Activated CD4-positive, alpha-beta memory T cell treated with anti-CD3 and anti-CD28 coated beads for 36 hours (primary cell): ENCODE measurements at regions of chr15 and their contacts with region 1.

Region 1: DNA sequence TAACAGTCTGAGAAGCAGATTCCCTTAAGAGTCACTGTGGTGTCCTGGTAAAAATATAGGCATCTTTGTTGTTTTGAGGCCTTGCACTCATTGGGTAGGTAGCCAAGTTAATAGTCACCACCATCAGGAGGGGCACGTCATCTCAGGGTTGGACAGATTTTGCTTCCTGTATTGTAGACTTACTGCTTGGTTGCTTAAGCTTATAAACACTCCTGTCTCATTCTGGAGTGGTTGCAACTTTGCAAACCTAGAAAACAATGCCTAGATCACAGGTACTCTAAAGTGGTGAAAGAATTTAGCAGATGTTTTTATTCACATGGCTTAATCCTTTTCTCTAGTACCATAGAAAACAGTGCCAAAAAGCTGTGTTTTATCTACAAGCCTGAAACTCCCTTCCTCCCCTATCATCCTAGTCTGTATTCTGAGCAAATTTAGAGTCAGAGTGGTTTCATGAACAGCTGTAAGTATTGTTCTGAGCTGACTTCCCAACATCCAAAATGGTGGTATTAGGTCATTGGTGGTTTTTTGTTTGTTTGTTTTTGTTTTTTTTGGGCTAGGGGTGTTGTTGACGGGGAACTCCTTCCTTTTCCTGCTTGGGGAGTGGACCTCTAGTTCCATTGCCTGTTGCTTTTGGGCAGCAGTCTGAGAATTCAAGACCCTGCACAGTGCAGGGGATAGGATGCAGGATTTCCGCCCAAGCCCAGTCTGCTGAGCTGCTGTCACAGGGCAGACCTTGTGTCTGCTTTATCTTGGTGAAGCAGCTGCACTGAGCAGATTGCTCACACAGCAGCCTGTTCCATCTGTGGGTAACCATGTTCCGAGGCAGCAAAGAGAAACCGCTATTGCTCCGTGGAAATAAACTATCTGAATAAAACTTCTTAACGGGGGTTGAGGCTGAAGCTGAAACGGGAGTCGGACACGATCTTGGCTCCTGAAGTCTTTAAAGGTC is 202.0 kb downstream of the AKAP13 start:
- DNase-seq: peak; percentile 79
- H3K4me3 Mint-ChIP-seq: peak overlapping the region; percentile 86
- H3K27ac Mint-ChIP-seq: peak overlapping the region; percentile 93
- H3K4me1 Mint-ChIP-seq: peaks cover 79% of the 10 kb centered on the region
- H3K27me3 Mint-ChIP-seq: no peaks in the 10 kb centered on the region

Region 2: DNA sequence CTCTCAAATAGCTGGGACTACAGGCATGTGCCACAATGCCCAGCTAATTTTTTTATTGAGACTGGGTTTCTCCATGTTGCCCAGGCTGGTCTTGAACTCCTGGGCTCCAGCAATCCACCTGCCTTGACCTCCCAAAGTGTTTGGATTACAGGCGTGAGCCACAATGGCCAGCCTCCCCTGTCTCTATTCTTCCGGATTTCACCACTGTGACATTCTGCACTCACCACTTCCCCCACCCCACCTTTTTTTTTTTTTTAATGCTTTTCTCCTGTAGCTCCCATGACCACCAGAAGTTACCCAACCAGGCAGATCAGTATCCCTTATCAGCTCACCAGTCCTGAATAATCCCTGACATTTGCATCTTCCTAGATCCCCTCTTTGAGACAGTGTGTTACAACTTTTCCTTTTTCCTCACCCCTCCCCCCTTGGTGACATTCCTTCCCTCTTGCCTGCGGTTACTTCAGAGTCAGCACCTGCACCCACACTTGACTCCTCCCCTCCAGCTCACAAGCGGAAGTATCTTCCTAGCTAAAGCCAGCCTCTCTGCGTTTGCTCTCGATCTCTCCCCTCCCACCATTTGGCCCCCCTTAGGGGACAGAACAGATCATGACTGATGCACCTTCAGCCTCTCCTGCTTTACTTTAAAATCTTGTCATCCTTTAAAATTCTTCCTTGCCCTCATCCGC is 847.5 kb before region 1 on chr15:
- CTCF ChIA-PET with region 1: no interaction called
- POLR2A ChIA-PET with region 1: no interaction called
- intact Hi-C with region 1: loop called (anchors 5 kb)
- DNase-seq: peak; percentile 86
- H3K4me3 Mint-ChIP-seq: peak overlapping the region; percentile 67
- H3K27ac Mint-ChIP-seq: peak overlapping the region; percentile 96
- H3K4me1 Mint-ChIP-seq: peaks cover 61% of the 10 kb centered on the region
- H3K27me3 Mint-ChIP-seq: no peaks in the 10 kb centered on the region

Region 3: GRCh38 chr15:85407804-85408746 is 174.3 kb before region 1 on chr15:
- CTCF ChIA-PET with region 1: interaction called, 3 read pairs
- POLR2A ChIA-PET with region 1: no interaction called
- intact Hi-C with region 1: loop called (anchors 1 kb)
- DNase-seq: peak; percentile 64
- H3K4me3 Mint-ChIP-seq: peak overlapping the region; percentile 53
- H3K27ac Mint-ChIP-seq: peak overlapping the region; percentile 91
- H3K4me1 Mint-ChIP-seq: peaks cover 81% of the 10 kb centered on the region
- H3K27me3 Mint-ChIP-seq: no peaks in the 10 kb centered on the region

Region 4: GRCh38 chr15:85543741-85544155 is 38.7 kb before region 1 on chr15:
- CTCF ChIA-PET with region 1: interaction called, 13 read pairs
- POLR2A ChIA-PET with region 1: interaction called, 27 read pairs
- intact Hi-C with region 1: loop called (anchors 1 kb)
- DNase-seq: peak; percentile 20
- H3K4me3 Mint-ChIP-seq: no peak overlapping the region
- H3K27ac Mint-ChIP-seq: no peak overlapping the region
- H3K4me1 Mint-ChIP-seq: peaks cover 80% of the 10 kb centered on the region
- H3K27me3 Mint-ChIP-seq: no peaks in the 10 kb centered on the region

Region 5: DNA sequence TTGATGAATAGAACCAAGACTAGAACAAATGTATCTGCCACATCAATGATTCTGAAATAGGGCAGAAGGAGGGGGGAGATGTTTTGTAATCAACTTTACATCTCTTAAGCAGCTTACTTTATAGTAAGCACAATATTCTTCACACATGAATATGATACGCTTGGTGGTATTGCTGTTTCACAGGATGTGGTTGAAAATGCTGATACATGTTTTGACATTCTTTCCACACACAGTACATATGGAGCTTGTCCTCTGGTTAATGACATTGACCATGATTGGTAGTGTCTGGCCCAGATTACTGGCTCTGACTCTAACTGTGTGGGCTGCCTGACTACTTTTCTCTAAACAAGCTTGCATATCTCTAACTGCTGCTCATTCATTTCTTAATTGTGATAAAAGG is 43.5 kb after region 1 on chr15:
- CTCF ChIA-PET with region 1: interaction called, 4 read pairs
- POLR2A ChIA-PET with region 1: interaction called, 12 read pairs
- intact Hi-C with region 1: no loop called
- DNase-seq: peak; percentile 65
- H3K4me3 Mint-ChIP-seq: peak overlapping the region; percentile 33
- H3K27ac Mint-ChIP-seq: peak overlapping the region; percentile 87
- H3K4me1 Mint-ChIP-seq: peaks cover 18% of the 10 kb centered on the region
- H3K27me3 Mint-ChIP-seq: no peaks in the 10 kb centered on the region

Region 6: DNA sequence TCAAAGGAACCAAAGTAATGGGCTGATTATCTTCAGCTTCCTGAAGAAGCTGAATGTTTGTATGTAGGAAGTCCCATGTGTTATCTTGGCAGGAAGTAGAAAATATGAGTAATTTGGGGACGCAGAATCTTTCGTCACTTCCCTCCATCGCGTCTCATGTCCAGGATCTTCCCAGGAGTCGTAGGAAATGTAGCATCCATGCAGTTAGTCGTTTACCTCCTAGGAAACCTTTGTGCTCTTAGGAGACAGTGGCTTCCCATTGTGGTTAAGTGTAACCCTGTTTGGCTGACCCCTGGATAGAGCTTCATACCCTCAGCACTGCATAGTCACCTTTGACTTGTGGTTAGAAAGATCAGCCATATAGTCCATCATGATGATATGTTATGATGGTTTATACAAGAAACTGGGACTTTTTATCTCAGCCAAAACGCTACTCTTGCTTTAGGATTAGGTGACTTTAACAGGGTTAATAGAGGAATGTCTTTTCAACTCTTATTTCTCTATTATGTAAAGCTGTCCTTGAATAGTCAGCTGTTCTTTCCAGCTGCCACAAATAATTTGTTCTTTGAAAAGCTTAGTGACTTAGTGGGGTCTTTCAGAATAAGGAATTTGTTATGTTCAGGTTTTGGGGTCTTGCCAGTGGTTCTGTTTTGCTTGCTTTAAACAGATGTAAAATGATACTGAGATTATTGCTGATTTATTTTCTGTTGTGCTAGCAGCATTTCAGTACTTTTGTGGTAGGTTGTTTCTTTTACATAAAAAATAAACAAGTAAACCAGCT is 120.1 kb after region 1 on chr15:
- CTCF ChIA-PET with region 1: interaction called, 6 read pairs
- POLR2A ChIA-PET with region 1: interaction called, 22 read pairs
- intact Hi-C with region 1: loop called (anchors 1 kb)
- DNase-seq: peak; percentile 58
- H3K4me3 Mint-ChIP-seq: peak overlapping the region; percentile 64
- H3K27ac Mint-ChIP-seq: peak overlapping the region; percentile 92
- H3K4me1 Mint-ChIP-seq: peaks cover 71% of the 10 kb centered on the region
- H3K27me3 Mint-ChIP-seq: no peaks in the 10 kb centered on the region